CD4-positive, alpha-beta T cell (primary cell): ENCODE measurements at regions of chr7 and their contacts with region 1.

Region 1: GRCh38 chr7:56106108-56107073 is at the start of gene CHCHD2:
- DNase-seq: peak; percentile 85 to 99 (median 90)
- ATAC-seq: peak; percentile 92
- H3K4me3 ChIP-seq: peak within 1 kb of the TSS; percentile 97
- H3K4me3 Mint-ChIP-seq: peak within 1 kb of the TSS; percentile 96
- H3K27ac ChIP-seq: peak within 1 kb of the TSS; percentile 91 to 95
- H3K27ac Mint-ChIP-seq: peak within 1 kb of the TSS; percentile 98
- H3K4me1 ChIP-seq: peaks cover 22% of the 10 kb centered on the region
- H3K4me1 Mint-ChIP-seq: peaks cover 37% of the 10 kb centered on the region
- H3K27me3 ChIP-seq: no peaks in the 10 kb centered on the region
- H3K27me3 Mint-ChIP-seq: no peaks in the 10 kb centered on the region
- CTCF ChIP-seq: no peak
- total RNA-seq, gene CHCHD2: 250 to 252 TPM

Region 2: DNA sequence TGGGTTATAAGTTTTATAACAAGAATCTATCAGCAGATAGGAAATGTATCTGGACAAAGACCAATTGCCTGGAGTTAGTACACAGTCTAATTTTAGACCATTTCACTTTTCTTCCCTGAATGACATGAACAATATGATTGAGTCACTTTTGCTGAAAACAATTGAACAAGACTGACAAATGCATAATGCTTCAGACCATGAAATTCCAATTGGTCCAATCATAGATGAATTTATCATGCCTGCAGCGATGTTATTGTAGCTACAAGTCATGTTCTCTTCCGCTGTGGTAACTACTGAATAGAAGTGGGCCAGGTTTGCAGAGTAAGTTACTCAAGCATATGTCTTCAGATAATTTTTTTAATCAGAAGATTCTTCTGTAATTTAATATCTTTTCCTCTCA is 1490.9 kb before region 1 on chr7:
- CTCF ChIA-PET with region 1: no interaction called
- POLR2A ChIA-PET with region 1: no interaction called
- intact Hi-C with region 1: no loop called
- DNase-seq: no peak
- ATAC-seq: no peak
- H3K4me3 ChIP-seq: no peak overlapping the region
- H3K4me3 Mint-ChIP-seq: no peak overlapping the region
- H3K27ac ChIP-seq: no peak overlapping the region
- H3K27ac Mint-ChIP-seq: no peak overlapping the region
- H3K4me1 ChIP-seq: no peaks in the 10 kb centered on the region
- H3K4me1 Mint-ChIP-seq: no peaks in the 10 kb centered on the region
- H3K27me3 ChIP-seq: no peaks in the 10 kb centered on the region
- H3K27me3 Mint-ChIP-seq: no peaks in the 10 kb centered on the region
- CTCF ChIP-seq: no peak

Region 3: GRCh38 chr7:54758702-54759592 is 1347.4 kb before region 1 on chr7 and contains the start of gene SEC61G:
- CTCF ChIA-PET with region 1: no interaction called
- POLR2A ChIA-PET with region 1: interaction called, 10 read pairs
- intact Hi-C with region 1: loop called in 1 of 2 experiments (anchors 5 kb)
- DNase-seq: peak; percentile 91 to 98 (median 93)
- ATAC-seq: peak; percentile 97
- H3K4me3 ChIP-seq: peak within 1 kb of the TSS; percentile 69
- H3K4me3 Mint-ChIP-seq: peak within 1 kb of the TSS; percentile 96
- H3K27ac ChIP-seq: peak within 1 kb of the TSS; percentile 63 to 73
- H3K27ac Mint-ChIP-seq: peak within 1 kb of the TSS; percentile 95
- H3K4me1 ChIP-seq: peaks cover 21% of the 10 kb centered on the region
- H3K4me1 Mint-ChIP-seq: peaks cover 54% of the 10 kb centered on the region
- H3K27me3 ChIP-seq: no peaks in the 10 kb centered on the region
- H3K27me3 Mint-ChIP-seq: no peaks in the 10 kb centered on the region
- CTCF ChIP-seq: no peak
- total RNA-seq, gene SEC61G: 43.9 to 51.3 TPM

Region 4: DNA sequence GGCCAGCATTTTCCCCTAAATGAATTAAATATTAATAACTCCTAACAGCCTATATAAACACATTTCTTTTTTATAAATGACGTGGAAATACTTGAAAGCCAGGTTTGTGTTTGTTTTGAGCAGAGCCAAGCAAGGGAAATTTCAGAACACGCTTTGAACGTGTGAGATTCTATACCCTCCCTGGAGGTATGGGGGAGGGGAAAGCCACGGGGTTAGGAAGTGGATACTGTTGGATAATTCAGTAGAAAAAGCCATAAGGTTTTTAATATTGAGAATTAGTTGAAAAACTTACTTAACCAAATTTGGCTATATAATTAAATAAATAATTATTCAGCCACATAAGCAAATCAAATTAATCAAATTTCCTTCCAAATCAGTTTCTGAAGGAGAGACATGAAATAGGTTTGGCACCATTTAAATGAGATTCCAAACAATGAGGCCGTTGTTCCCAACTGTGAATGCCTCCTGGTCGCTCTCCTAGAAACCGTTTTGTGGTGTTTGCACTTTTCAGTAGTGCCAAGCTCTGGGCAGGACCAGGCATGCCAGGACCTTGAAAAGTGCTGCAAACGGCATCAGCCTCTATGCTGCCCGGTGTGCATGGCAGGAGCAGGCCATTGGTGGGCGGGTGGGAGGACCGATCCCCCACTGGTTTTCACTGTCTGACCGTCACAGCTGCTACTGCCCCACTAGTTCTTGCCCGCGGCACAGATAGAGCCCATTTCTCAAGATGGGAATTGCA is 331.9 kb before region 1 on chr7:
- CTCF ChIA-PET with region 1: no interaction called
- POLR2A ChIA-PET with region 1: no interaction called
- intact Hi-C with region 1: loop called in 1 of 2 experiments (anchors 10 kb)
- DNase-seq: no peak
- ATAC-seq: no peak
- H3K4me3 ChIP-seq: no peak overlapping the region
- H3K4me3 Mint-ChIP-seq: no peak overlapping the region
- H3K27ac ChIP-seq: no peak overlapping the region
- H3K27ac Mint-ChIP-seq: no peak overlapping the region
- H3K4me1 ChIP-seq: no peaks in the 10 kb centered on the region
- H3K4me1 Mint-ChIP-seq: no peaks in the 10 kb centered on the region
- H3K27me3 ChIP-seq: no peaks in the 10 kb centered on the region
- H3K27me3 Mint-ChIP-seq: no peaks in the 10 kb centered on the region
- CTCF ChIP-seq: no peak

Region 5: DNA sequence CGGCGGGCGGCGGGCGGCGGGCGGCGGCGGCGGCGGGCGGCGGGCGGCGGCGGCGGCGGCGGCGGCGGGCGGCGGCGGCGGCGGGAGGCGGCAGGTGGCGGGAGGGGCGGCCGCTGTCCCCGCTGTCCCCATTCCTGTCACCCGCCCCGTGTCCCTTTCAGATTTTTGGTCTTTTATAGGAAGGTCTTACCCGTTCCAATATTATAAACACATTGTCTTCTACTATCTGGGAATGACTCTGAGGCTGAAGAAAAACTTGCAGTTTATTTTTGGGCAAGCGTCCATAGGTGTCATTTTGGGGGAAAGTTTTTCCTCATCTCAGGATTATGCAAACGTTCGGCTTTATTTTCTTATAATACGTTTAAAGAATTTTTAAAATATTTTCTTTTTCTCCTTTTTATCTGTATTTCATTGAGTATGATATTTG is 218.6 kb before region 1 on chr7:
- CTCF ChIA-PET with region 1: no interaction called
- POLR2A ChIA-PET with region 1: no interaction called
- intact Hi-C with region 1: loop called in 1 of 2 experiments (anchors 2 kb)
- DNase-seq: peak in 1 of 14 experiments; percentile 1
- ATAC-seq: peak; percentile 12
- H3K4me3 ChIP-seq: peak overlapping the region; percentile 60
- H3K4me3 Mint-ChIP-seq: peak overlapping the region; percentile 90
- H3K27ac ChIP-seq: no peak overlapping the region
- H3K27ac Mint-ChIP-seq: peak overlapping the region; percentile 90
- H3K4me1 ChIP-seq: peaks cover 13% of the 10 kb centered on the region
- H3K4me1 Mint-ChIP-seq: peaks cover 6% of the 10 kb centered on the region
- H3K27me3 ChIP-seq: no peaks in the 10 kb centered on the region
- H3K27me3 Mint-ChIP-seq: no peaks in the 10 kb centered on the region
- CTCF ChIP-seq: no peak

Region 6: DNA sequence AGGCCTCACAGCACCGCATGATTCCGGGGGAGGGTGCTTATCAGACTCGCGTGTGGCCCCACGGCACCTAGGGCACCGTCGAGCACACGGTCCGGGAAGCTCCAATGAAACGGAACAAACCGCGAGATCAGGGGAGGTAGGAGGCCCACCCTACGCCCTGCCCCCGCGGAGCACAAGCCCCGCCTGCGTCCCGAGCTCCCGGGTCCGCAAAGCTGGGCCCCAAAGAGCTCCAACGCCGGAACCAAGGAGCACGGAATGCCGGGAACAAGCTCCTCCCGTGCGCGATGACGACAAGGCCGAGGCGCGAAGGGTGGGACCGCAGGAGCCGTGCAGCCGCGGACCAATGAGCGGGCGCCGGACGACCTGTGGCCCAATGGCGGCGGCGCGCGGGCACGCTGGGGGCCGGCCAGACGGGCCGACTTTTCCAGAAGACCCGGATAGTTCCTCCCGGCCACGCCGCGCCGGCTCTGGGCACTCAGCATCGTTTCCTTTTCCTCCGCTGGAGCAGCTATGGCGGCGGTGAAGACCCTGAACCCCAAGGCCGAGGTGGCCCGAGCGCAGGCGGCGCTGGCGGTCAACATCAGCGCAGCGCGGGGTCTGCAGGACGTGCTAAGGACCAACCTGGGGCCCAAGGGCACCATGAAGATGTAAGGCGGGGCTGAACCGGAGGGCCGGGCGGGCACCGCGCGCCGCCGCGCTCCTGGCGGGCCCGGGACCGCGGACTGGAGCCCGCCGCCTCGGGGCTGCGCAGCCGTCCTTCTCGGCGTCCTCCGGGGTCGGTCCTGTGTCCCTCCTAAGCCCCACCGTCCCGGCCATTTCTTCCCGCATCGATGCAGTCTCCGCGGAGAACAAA is 54.8 kb before region 1 on chr7 and contains the starts of genes CCT6A and PSPH:
- CTCF ChIA-PET with region 1: interaction called, 3 read pairs
- POLR2A ChIA-PET with region 1: interaction called, 15 read pairs
- intact Hi-C with region 1: loop called in 1 of 2 experiments (anchors 5 kb)
- DNase-seq: peak; percentile 66 to 95 (median 86)
- ATAC-seq: peak; percentile 86
- H3K4me3 ChIP-seq: peak within 1 kb of the TSS; percentile 74
- H3K4me3 Mint-ChIP-seq: peak within 1 kb of the TSS; percentile 93
- H3K27ac ChIP-seq: peak within 1 kb of the TSS; percentile 66 to 81
- H3K27ac Mint-ChIP-seq: peak within 1 kb of the TSS; percentile 83
- H3K4me1 ChIP-seq: peaks cover 27% of the 10 kb centered on the region
- H3K4me1 Mint-ChIP-seq: peaks cover 54% of the 10 kb centered on the region
- H3K27me3 ChIP-seq: no peaks in the 10 kb centered on the region
- H3K27me3 Mint-ChIP-seq: no peaks in the 10 kb centered on the region
- CTCF ChIP-seq: no peak
- total RNA-seq, gene CCT6A: 31.8 to 33.0 TPM
- total RNA-seq, gene PSPH: 1.2 to 1.9 TPM

Region 7: GRCh38 chr7:56063882-56064625 is 42.3 kb before region 1 on chr7 and contains the start of gene SUMF2:
- CTCF ChIA-PET with region 1: interaction called, 6 read pairs
- POLR2A ChIA-PET with region 1: interaction called, 42 read pairs
- intact Hi-C with region 1: loop called (anchors 1 to 5 kb)
- DNase-seq: peak; percentile 81 to 97 (median 89)
- ATAC-seq: peak; percentile 89
- H3K4me3 ChIP-seq: peak within 1 kb of the TSS; percentile 95
- H3K4me3 Mint-ChIP-seq: peak within 1 kb of the TSS; percentile 93
- H3K27ac ChIP-seq: peak within 1 kb of the TSS; percentile 82 to 84
- H3K27ac Mint-ChIP-seq: peak within 1 kb of the TSS; percentile 95
- H3K4me1 ChIP-seq: peaks cover 25% of the 10 kb centered on the region
- H3K4me1 Mint-ChIP-seq: peaks cover 31% of the 10 kb centered on the region
- H3K27me3 ChIP-seq: no peaks in the 10 kb centered on the region
- H3K27me3 Mint-ChIP-seq: no peaks in the 10 kb centered on the region
- CTCF ChIP-seq: no peak
- total RNA-seq, gene SUMF2: 95.8 to 102 TPM

Region 8: GRCh38 chr7:56199639-56200038 is 93.2 kb after region 1 on chr7:
- CTCF ChIA-PET with region 1: no interaction called
- POLR2A ChIA-PET with region 1: no interaction called
- intact Hi-C with region 1: loop called in 1 of 2 experiments (anchors 10 kb)
- DNase-seq: no peak
- ATAC-seq: no peak
- H3K4me3 ChIP-seq: no peak overlapping the region
- H3K4me3 Mint-ChIP-seq: no peak overlapping the region
- H3K27ac ChIP-seq: no peak overlapping the region
- H3K27ac Mint-ChIP-seq: no peak overlapping the region
- H3K4me1 ChIP-seq: no peaks in the 10 kb centered on the region
- H3K4me1 Mint-ChIP-seq: no peaks in the 10 kb centered on the region
- H3K27me3 ChIP-seq: no peaks in the 10 kb centered on the region
- H3K27me3 Mint-ChIP-seq: peaks cover 4% of the 10 kb centered on the region
- CTCF ChIP-seq: no peak